ENCODE measurements at regions of chr6 and their contacts with region 1.

Region 1: GRCh38 chr6:108655806-108656651 is 95.3 kb downstream of the FOXO3 start:
- DNase-seq: peak in 2 of 5 donors; percentile 53 to 54
- ATAC-seq: peak; percentile 17 to 62 (median 47)
- H3K4me3 ChIP-seq: peak overlapping the region in 6 of 12 donors; percentile 11 to 29 (median 16)
- H3K27ac ChIP-seq: peak overlapping the region; percentile 53 to 91 (median 84)
- H3K4me1 ChIP-seq: peaks cover 27 to 92% (median 80%) of the 10 kb centered on the region in 12 donors
- H3K27me3 ChIP-seq: no peaks in the 10 kb centered on the region
- CTCF ChIP-seq: no peak
- POLR2A ChIP-seq: no peak

Region 2: DNA sequence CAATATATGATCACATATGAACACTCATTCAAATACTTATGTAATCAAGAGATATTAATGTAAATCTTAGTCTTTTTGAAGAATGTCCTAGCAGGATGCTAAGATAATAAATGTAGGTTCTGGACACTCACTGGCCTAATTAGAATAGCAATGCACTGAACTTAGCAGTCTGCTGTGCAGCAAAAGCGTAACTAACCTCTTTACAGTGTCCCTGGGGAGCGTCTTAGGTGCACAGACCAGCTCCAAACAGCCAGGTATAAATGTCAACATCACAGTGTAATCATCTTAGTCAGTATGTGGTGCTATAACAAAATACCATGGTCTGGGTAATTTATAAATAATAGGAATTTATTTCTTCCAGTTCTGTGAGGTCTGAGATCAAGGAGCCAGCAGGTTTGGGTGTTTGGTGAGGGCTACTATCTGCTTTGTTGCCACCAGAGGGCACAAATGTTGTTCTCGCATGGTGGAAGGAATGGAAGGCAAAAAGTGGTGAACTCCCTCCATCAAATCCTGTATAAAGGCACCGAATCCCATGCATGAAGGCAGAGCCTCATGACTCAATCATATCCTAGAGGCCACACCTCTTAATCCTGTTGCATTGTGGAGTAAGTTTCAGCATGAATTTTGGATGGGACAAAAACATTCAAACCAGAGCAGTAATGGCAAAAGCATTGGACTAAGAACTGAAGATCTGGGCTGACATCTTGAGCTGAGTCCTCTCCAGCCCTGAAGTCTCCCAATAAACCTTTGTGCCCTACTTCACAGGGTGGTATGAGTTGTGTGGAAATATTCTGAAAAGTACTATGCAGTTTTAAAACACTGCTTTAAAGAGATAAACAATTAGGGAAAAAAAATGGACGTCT is 137.1 kb before region 1 on chr6:
- intact Hi-C with region 1: no loop called
- DNase-seq: no peak
- ATAC-seq: no peak
- H3K4me3 ChIP-seq: no peak overlapping the region
- H3K27ac ChIP-seq: no peak overlapping the region
- H3K4me1 ChIP-seq: no peaks in the 10 kb centered on the region
- H3K27me3 ChIP-seq: no peaks in the 10 kb centered on the region
- CTCF ChIP-seq: peak in 7 of 12 donors; percentile 11 to 33 (median 28)
- POLR2A ChIP-seq: no peak

Region 3: DNA sequence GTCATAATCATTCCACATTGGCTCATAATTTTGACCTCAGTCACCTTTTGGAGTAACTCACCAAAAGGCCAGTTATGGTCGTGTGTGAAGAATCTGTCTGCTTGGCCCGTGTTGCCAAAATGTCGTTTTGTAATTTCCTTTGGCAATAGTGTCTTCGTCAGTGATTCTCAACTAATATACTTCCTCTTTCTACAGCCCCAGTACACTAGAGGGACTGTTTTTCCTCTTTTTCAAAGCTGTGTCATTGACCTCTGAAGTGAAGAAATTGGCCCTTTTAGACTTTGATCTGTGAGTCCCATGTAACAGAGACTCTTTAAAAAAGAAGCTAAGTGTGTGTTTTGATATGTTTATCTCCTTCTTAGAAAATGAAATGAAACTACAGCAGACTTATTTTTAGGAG is 90.1 kb before region 1 on chr6:
- intact Hi-C with region 1: loop called in 6 of 10 experiments (anchors 5 to 10 kb)
- DNase-seq: peak in 4 of 5 donors; percentile 43 to 69 (median 52)
- ATAC-seq: peak; percentile 14 to 56 (median 48)
- H3K4me3 ChIP-seq: peak overlapping the region in 5 of 12 donors; percentile 2 to 98 (median 90)
- H3K27ac ChIP-seq: peak overlapping the region; percentile 44 to 100 (median 98)
- H3K4me1 ChIP-seq: peaks cover 9 to 84% (median 55%) of the 10 kb centered on the region in 12 donors
- H3K27me3 ChIP-seq: no peaks in the 10 kb centered on the region
- CTCF ChIP-seq: peak in 7 of 12 donors; percentile 8 to 44 (median 24)
- POLR2A ChIP-seq: no peak

Region 4: GRCh38 chr6:108581237-108581931 is 74.6 kb before region 1 on chr6:
- intact Hi-C with region 1: loop called in 1 of 10 experiments (anchors 5 kb)
- DNase-seq: no peak
- ATAC-seq: peak in 2 of 4 donors; percentile 52 to 67
- H3K4me3 ChIP-seq: peak overlapping the region in 3 of 12 donors; percentile 9 to 20 (median 13)
- H3K27ac ChIP-seq: peak overlapping the region in 11 of 12 donors; percentile 21 to 89 (median 63)
- H3K4me1 ChIP-seq: peaks cover 33 to 98% (median 94%) of the 10 kb centered on the region in 12 donors
- H3K27me3 ChIP-seq: no peaks in the 10 kb centered on the region
- CTCF ChIP-seq: no peak
- POLR2A ChIP-seq: no peak

Region 5: GRCh38 chr6:108589287-108589791 is 66.7 kb before region 1 on chr6:
- intact Hi-C with region 1: loop called in 4 of 10 experiments (anchors 2 to 5 kb)
- DNase-seq: peak; percentile 54 to 79 (median 71)
- ATAC-seq: peak; percentile 85 to 91 (median 88)
- H3K4me3 ChIP-seq: peak overlapping the region in 5 of 12 donors; percentile 0 to 21 (median 7)
- H3K27ac ChIP-seq: peak overlapping the region; percentile 46 to 89 (median 80)
- H3K4me1 ChIP-seq: peaks cover 45 to 98% (median 96%) of the 10 kb centered on the region in 12 donors
- H3K27me3 ChIP-seq: no peaks in the 10 kb centered on the region
- CTCF ChIP-seq: no peak
- POLR2A ChIP-seq: peak in 1 of 2 donors; percentile 41

Region 6: GRCh38 chr6:108689247-108690161 is 33.5 kb after region 1 on chr6:
- intact Hi-C with region 1: no loop called
- DNase-seq: peak; percentile 85 to 94 (median 90)
- ATAC-seq: peak; percentile 91 to 97 (median 96)
- H3K4me3 ChIP-seq: no peak overlapping the region
- H3K27ac ChIP-seq: peak overlapping the region in 11 of 12 donors; percentile 22 to 78 (median 65)
- H3K4me1 ChIP-seq: peaks cover 0 to 53% (median 29%) of the 10 kb centered on the region in 12 donors
- H3K27me3 ChIP-seq: no peaks in the 10 kb centered on the region
- CTCF ChIP-seq: no peak
- POLR2A ChIP-seq: no peak

Region 7: DNA sequence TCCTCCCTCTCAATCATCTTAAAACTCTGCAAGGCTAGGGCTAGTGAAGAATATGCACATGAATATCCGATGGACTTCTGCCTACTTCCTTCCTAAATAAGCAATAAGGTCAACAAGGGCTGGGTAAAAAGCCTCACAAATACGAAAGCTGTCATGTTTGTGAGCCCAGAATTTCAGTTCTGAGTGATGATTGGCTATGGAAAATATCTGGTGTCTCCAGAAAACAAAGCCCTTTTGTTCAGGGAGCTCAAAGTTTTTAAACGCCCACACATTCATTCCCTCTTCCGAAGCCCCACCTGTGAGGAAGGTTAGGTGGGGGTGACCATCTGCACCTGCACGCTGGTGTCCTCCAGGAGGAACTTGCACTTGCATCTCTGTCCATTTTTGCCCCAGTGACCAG is 65.3 kb after region 1 on chr6:
- intact Hi-C with region 1: no loop called
- DNase-seq: no peak
- ATAC-seq: no peak
- H3K4me3 ChIP-seq: no peak overlapping the region
- H3K27ac ChIP-seq: no peak overlapping the region
- H3K4me1 ChIP-seq: peaks cover 0 to 10% (median 0%) of the 10 kb centered on the region in 12 donors
- H3K27me3 ChIP-seq: no peaks in the 10 kb centered on the region
- CTCF ChIP-seq: no peak
- POLR2A ChIP-seq: no peak

Region 8: GRCh38 chr6:108782179-108783041 is 126.4 kb after region 1 on chr6:
- intact Hi-C with region 1: loop called in 1 of 10 experiments (anchors 5 kb)
- DNase-seq: peak; percentile 81 to 88 (median 83)
- ATAC-seq: peak; percentile 85 to 96 (median 94)
- H3K4me3 ChIP-seq: peak overlapping the region in 11 of 12 donors; percentile 4 to 66 (median 54)
- H3K27ac ChIP-seq: peak overlapping the region in 4 of 12 donors; percentile 25 to 68 (median 55)
- H3K4me1 ChIP-seq: peaks cover 0 to 15% (median 6%) of the 10 kb centered on the region in 12 donors
- H3K27me3 ChIP-seq: no peaks in the 10 kb centered on the region
- CTCF ChIP-seq: peak; percentile 65 to 88 (median 78)
- POLR2A ChIP-seq: no peak

Region 9: DNA sequence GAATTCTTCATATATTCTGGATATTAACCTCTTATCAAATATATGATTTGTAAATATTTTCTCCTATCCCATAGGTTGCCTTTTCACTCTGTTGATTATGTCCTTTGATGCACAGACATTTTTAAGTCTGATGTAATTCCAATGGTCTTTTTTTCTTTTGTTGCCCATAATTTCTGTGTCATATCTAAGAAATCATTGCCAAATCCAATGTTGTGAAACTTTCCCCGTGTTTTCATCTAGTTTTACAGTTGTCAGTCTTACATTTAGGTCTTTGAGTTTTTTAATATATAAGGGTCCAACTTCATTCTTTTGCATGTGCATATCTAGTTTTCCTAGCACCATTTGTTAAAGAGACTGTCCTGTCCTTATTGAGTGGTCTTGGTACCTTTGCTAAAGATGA is 327.1 kb after region 1 on chr6:
- intact Hi-C with region 1: no loop called
- DNase-seq: no peak
- ATAC-seq: no peak
- H3K4me3 ChIP-seq: no peak overlapping the region
- H3K27ac ChIP-seq: peak overlapping the region in 1 of 12 donors; percentile 28
- H3K4me1 ChIP-seq: peaks cover 0 to 31% (median 4%) of the 10 kb centered on the region in 12 donors
- H3K27me3 ChIP-seq: no peaks in the 10 kb centered on the region
- CTCF ChIP-seq: no peak
- POLR2A ChIP-seq: no peak

Measured in heart left ventricle (tissue), 16 donors.